ENCODE measurements at regions of chr2 and their contacts with region 1.

Region 1: GRCh38 chr2:178414266-178415247 is 36.4 kb downstream of the PRKRA start:
- DNase-seq: peak; percentile 50 to 77 (median 64)
- ATAC-seq: peak; percentile 86
- H3K4me3 ChIP-seq: peak overlapping the region; percentile 53
- H3K4me3 Mint-ChIP-seq: peak overlapping the region; percentile 83 to 98 (median 90)
- H3K27ac ChIP-seq: peak overlapping the region; percentile 72
- H3K27ac Mint-ChIP-seq: peak overlapping the region; percentile 85 to 99 (median 94)
- H3K4me1 ChIP-seq: peaks cover 6 to 7% of the 10 kb centered on the region in 2 donors
- H3K4me1 Mint-ChIP-seq: peaks cover 5 to 58% (median 23%) of the 10 kb centered on the region in 7 donors
- H3K27me3 ChIP-seq: no peaks in the 10 kb centered on the region
- H3K27me3 Mint-ChIP-seq: peaks cover 0 to 3% (median 0%) of the 10 kb centered on the region in 5 donors

Region 2: GRCh38 chr2:177552422-177553175 is 862.0 kb before region 1 on chr2:
- CTCF ChIA-PET with region 1: no interaction called
- POLR2A ChIA-PET with region 1: no interaction called
- intact Hi-C with region 1: loop called in 1 of 2 experiments (anchors 5 kb)
- DNase-seq: peak; percentile 82 to 96 (median 94)
- ATAC-seq: peak; percentile 94
- H3K4me3 ChIP-seq: peak overlapping the region; percentile 89
- H3K4me3 Mint-ChIP-seq: peak overlapping the region; percentile 87 to 99 (median 94)
- H3K27ac ChIP-seq: peak overlapping the region; percentile 100
- H3K27ac Mint-ChIP-seq: peak overlapping the region; percentile 98 to 100 (median 99)
- H3K4me1 ChIP-seq: no peaks in the 10 kb centered on the region
- H3K4me1 Mint-ChIP-seq: peaks cover 4 to 29% (median 14%) of the 10 kb centered on the region in 7 donors
- H3K27me3 ChIP-seq: no peaks in the 10 kb centered on the region
- H3K27me3 Mint-ChIP-seq: peaks cover 0 to 14% (median 4%) of the 10 kb centered on the region in 5 donors

Region 3: GRCh38 chr2:178193823-178194599 is 220.5 kb before region 1 on chr2 and contains the start of gene OSBPL6:
- CTCF ChIA-PET with region 1: no interaction called
- POLR2A ChIA-PET with region 1: interaction called, 3 read pairs
- intact Hi-C with region 1: loop called in 1 of 2 experiments (anchors 10 kb)
- DNase-seq: peak; percentile 10 to 82 (median 41)
- ATAC-seq: peak; percentile 87
- H3K4me3 ChIP-seq: peak within 1 kb of the TSS; percentile 46
- H3K4me3 Mint-ChIP-seq: peak within 1 kb of the TSS; percentile 56 to 83 (median 77)
- H3K27ac ChIP-seq: no peak within 1 kb of the TSS
- H3K27ac Mint-ChIP-seq: no peak within 1 kb of the TSS
- H3K4me1 ChIP-seq: peaks cover 6% of the 10 kb centered on the region in 2 donors
- H3K4me1 Mint-ChIP-seq: peaks cover 6 to 19% (median 13%) of the 10 kb centered on the region in 7 donors
- H3K27me3 ChIP-seq: peaks cover 18% of the 10 kb centered on the region in 2 donors
- H3K27me3 Mint-ChIP-seq: peaks cover 45 to 59% (median 54%) of the 10 kb centered on the region in 5 donors
- total RNA-seq, gene OSBPL6: 0.05 to 1.1 (median 0.44) TPM in 4 of 5 experiments, not detected in the other

Region 4: GRCh38 chr2:178377046-178377445 is 37.5 kb before region 1 on chr2:
- CTCF ChIA-PET with region 1: no interaction called
- POLR2A ChIA-PET with region 1: no interaction called
- intact Hi-C with region 1: no loop called
- DNase-seq: no peak
- ATAC-seq: no peak
- H3K4me3 ChIP-seq: no peak overlapping the region
- H3K4me3 Mint-ChIP-seq: no peak overlapping the region
- H3K27ac ChIP-seq: no peak overlapping the region
- H3K27ac Mint-ChIP-seq: no peak overlapping the region
- H3K4me1 ChIP-seq: no peaks in the 10 kb centered on the region
- H3K4me1 Mint-ChIP-seq: peaks cover 0 to 5% (median 0%) of the 10 kb centered on the region in 7 donors
- H3K27me3 ChIP-seq: peaks cover 0 to 6% of the 10 kb centered on the region in 2 donors
- H3K27me3 Mint-ChIP-seq: peaks cover 27 to 38% (median 30%) of the 10 kb centered on the region in 5 donors

Region 5: DNA sequence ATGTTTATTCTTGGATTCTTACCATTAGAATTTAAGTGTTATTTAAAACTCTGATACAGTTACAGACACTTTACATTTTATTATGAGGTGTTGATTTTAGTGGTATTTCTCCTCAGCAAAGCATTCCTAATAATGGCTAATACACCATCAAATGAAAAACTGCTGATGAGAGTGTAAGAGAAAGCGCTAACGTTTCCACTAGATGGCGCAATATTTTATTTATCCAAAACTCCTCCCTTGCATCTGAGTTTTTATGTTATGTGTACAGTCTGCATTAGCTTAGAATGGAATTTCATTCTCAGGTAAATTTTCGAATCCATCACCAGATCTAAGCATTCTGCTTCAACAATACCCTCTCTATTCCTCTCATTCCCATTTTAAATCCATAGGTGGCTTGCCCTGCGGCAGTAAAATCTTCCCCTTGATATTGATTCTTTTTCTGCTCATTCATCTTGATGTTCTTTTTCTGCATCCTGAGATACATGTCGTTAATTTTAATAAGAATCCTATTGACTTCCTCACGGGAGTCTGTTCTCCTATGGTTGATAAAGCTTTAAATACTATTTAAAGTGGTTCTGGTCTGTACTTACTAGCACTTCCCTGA is 17.5 kb before region 1 on chr2:
- CTCF ChIA-PET with region 1: interaction called, 37 read pairs
- POLR2A ChIA-PET with region 1: no interaction called
- intact Hi-C with region 1: loop called (anchors 1 kb)
- DNase-seq: peak in 6 of 9 donors; percentile 5 to 44 (median 30)
- ATAC-seq: peak; percentile 75
- H3K4me3 ChIP-seq: no peak overlapping the region
- H3K4me3 Mint-ChIP-seq: no peak overlapping the region
- H3K27ac ChIP-seq: no peak overlapping the region
- H3K27ac Mint-ChIP-seq: no peak overlapping the region
- H3K4me1 ChIP-seq: no peaks in the 10 kb centered on the region
- H3K4me1 Mint-ChIP-seq: peaks cover 0 to 6% (median 0%) of the 10 kb centered on the region in 7 donors
- H3K27me3 ChIP-seq: no peaks in the 10 kb centered on the region
- H3K27me3 Mint-ChIP-seq: peaks cover 0 to 32% (median 5%) of the 10 kb centered on the region in 5 donors

Region 6: DNA sequence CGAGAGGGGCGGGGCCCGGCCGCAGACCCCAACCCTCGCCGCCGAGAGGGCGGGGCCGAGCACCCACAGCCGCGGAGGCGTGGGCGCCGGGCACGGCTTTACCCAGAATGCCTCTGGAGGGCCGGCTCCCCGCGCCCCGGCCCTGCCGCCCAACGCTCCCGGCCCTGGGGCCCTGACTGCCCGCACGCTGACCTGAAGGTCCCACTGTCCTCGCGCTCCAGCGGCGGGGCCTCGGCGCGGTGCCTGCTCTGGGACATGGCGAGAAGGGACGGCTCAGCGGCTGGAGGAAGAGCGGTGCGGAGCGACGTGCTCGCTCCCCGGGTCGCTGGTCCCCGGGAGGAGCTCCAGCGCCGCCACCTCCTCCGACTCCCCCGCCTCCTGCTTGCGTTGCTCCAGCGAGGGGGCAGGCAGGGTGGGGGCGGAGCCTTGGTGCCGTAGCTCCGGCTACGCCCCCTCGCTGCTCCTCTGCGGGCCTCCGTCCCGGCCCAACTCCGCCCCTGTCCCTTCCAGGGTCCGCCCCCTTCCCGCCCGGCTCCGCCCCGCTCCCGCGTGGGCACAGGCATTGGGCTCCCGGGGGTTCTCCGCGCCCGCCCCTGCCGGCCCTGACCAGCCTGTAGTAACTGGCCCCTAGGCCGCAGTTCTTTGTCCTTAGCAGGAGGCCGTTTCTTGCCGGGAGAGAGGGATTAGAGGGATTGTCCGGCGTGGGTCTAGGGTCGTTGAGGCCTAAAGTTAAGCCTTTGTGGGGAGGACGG is 36.4 kb after region 1 on chr2 and contains the starts of genes PJVK and PRKRA:
- CTCF ChIA-PET with region 1: interaction called, 5 read pairs
- POLR2A ChIA-PET with region 1: interaction called, 31 read pairs
- intact Hi-C with region 1: loop called (anchors 1 kb)
- DNase-seq: peak; percentile 92 to 99 (median 93)
- ATAC-seq: peak; percentile 94
- H3K4me3 ChIP-seq: peak within 1 kb of the TSS; percentile 94
- H3K4me3 Mint-ChIP-seq: peak within 1 kb of the TSS; percentile 90 to 96 (median 90)
- H3K27ac ChIP-seq: peak within 1 kb of the TSS; percentile 100
- H3K27ac Mint-ChIP-seq: peak within 1 kb of the TSS; percentile 88 to 98 (median 95)
- H3K4me1 ChIP-seq: peaks cover 12 to 25% of the 10 kb centered on the region in 2 donors
- H3K4me1 Mint-ChIP-seq: peaks cover 12 to 36% (median 30%) of the 10 kb centered on the region in 7 donors
- H3K27me3 ChIP-seq: no peaks in the 10 kb centered on the region
- H3K27me3 Mint-ChIP-seq: peaks cover 0 to 9% (median 0%) of the 10 kb centered on the region in 5 donors
- total RNA-seq, gene PJVK: 2.1 to 6.3 (median 3.8) TPM
- total RNA-seq, gene PRKRA: 40.8 to 113 (median 59.4) TPM

Region 7: GRCh38 chr2:178522950-178523595 is 108.5 kb after region 1 on chr2:
- CTCF ChIA-PET with region 1: no interaction called
- POLR2A ChIA-PET with region 1: interaction called, 3 read pairs
- intact Hi-C with region 1: loop called (anchors 1 kb)
- DNase-seq: peak; percentile 65 to 85 (median 80)
- ATAC-seq: peak; percentile 100
- H3K4me3 ChIP-seq: peak overlapping the region; percentile 93
- H3K4me3 Mint-ChIP-seq: peak overlapping the region; percentile 84 to 96 (median 94)
- H3K27ac ChIP-seq: peak overlapping the region; percentile 75
- H3K27ac Mint-ChIP-seq: peak overlapping the region; percentile 80 to 96 (median 91)
- H3K4me1 ChIP-seq: peaks cover 7 to 10% of the 10 kb centered on the region in 2 donors
- H3K4me1 Mint-ChIP-seq: peaks cover 14 to 58% (median 22%) of the 10 kb centered on the region in 7 donors
- H3K27me3 ChIP-seq: no peaks in the 10 kb centered on the region
- H3K27me3 Mint-ChIP-seq: no peaks in the 10 kb centered on the region

Region 8: GRCh38 chr2:178767094-178768060 is 352.8 kb after region 1 on chr2:
- CTCF ChIA-PET with region 1: no interaction called
- POLR2A ChIA-PET with region 1: no interaction called
- intact Hi-C with region 1: no loop called
- DNase-seq: no peak
- ATAC-seq: no peak
- H3K4me3 ChIP-seq: no peak overlapping the region
- H3K4me3 Mint-ChIP-seq: no peak overlapping the region
- H3K27ac ChIP-seq: no peak overlapping the region
- H3K27ac Mint-ChIP-seq: no peak overlapping the region
- H3K4me1 ChIP-seq: no peaks in the 10 kb centered on the region
- H3K4me1 Mint-ChIP-seq: no peaks in the 10 kb centered on the region
- H3K27me3 ChIP-seq: no peaks in the 10 kb centered on the region
- H3K27me3 Mint-ChIP-seq: no peaks in the 10 kb centered on the region